ENCODE measurements at regions of chr19 and their contacts with region 1.

Region 1: DNA sequence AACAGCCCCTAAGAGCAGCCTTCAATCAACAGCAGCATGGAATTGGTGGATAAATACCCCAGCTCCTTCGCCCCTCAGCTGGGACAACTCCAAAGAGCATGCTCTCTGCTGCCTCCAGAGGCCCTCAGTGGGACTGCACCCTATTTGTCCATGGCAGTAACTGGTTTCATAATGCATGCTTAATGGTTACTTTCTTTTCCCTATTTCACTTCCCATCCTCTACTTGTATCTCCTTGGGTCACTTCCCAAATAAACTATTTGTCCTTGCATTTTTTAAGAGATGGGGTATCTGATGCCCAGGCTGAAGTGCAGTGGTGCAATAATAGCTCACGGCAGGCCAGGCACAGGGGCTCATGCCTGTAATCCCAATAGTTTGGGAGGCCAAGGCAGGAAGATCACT is 13.5 kb upstream of the TPM4 start:
- DNase-seq: peak; percentile 51 to 78 (median 66)
- ATAC-seq: peak; percentile 86
- H3K4me3 ChIP-seq: no peak overlapping the region
- H3K4me3 Mint-ChIP-seq: no peak overlapping the region
- H3K27ac ChIP-seq: no peak overlapping the region
- H3K27ac Mint-ChIP-seq: no peak overlapping the region
- H3K4me1 ChIP-seq: peaks cover 26% of the 10 kb centered on the region
- H3K4me1 Mint-ChIP-seq: peaks cover 16% of the 10 kb centered on the region
- H3K27me3 ChIP-seq: no peaks in the 10 kb centered on the region
- H3K27me3 Mint-ChIP-seq: no peaks in the 10 kb centered on the region
- CTCF ChIP-seq: peak; percentile 85

Region 2: DNA sequence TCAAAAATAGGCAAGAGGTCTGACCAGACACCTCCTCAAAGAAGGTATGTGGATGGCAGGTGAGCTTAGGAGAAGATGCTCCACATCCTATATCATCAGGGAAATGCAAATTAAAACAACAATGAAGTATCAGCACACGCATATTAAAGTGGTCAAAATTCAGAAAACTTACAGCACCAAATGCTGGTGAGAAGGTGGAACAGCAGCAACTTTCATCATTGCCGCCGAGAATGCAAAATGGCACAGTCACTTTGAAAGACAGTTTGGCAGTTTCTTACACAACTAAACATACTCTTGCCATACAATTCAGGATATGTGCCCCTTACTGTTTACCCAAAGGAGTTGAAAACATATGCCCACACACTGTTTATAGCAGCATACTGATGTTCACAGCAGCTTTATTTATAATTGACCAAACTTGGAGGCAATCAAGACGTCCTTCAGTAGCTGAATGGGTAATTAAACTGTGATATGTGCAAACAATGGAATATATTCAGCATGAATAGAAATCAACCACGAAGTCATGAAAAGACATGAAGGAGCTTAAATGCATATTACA is 91.5 kb before region 1 on chr19:
- CTCF ChIA-PET with region 1: no interaction called
- POLR2A ChIA-PET with region 1: no interaction called
- intact Hi-C with region 1: no loop called
- DNase-seq: no peak
- ATAC-seq: no peak
- H3K4me3 ChIP-seq: no peak overlapping the region
- H3K4me3 Mint-ChIP-seq: no peak overlapping the region
- H3K27ac ChIP-seq: no peak overlapping the region
- H3K27ac Mint-ChIP-seq: no peak overlapping the region
- H3K4me1 ChIP-seq: no peaks in the 10 kb centered on the region
- H3K4me1 Mint-ChIP-seq: no peaks in the 10 kb centered on the region
- H3K27me3 ChIP-seq: no peaks in the 10 kb centered on the region
- H3K27me3 Mint-ChIP-seq: peaks cover 20% of the 10 kb centered on the region
- CTCF ChIP-seq: no peak

Region 3: GRCh38 chr19:16030964-16031593 is 31.7 kb before region 1 on chr19:
- CTCF ChIA-PET with region 1: no interaction called
- POLR2A ChIA-PET with region 1: no interaction called
- intact Hi-C with region 1: no loop called
- DNase-seq: no peak
- ATAC-seq: no peak
- H3K4me3 ChIP-seq: no peak overlapping the region
- H3K4me3 Mint-ChIP-seq: no peak overlapping the region
- H3K27ac ChIP-seq: no peak overlapping the region
- H3K27ac Mint-ChIP-seq: no peak overlapping the region
- H3K4me1 ChIP-seq: no peaks in the 10 kb centered on the region
- H3K4me1 Mint-ChIP-seq: no peaks in the 10 kb centered on the region
- H3K27me3 ChIP-seq: no peaks in the 10 kb centered on the region
- H3K27me3 Mint-ChIP-seq: no peaks in the 10 kb centered on the region
- CTCF ChIP-seq: no peak

Region 4: GRCh38 chr19:16041299-16041990 is 21.3 kb before region 1 on chr19:
- CTCF ChIA-PET with region 1: interaction called, 23 read pairs
- POLR2A ChIA-PET with region 1: no interaction called
- intact Hi-C with region 1: no loop called
- DNase-seq: peak; percentile 50 to 86 (median 76)
- ATAC-seq: peak; percentile 91
- H3K4me3 ChIP-seq: no peak overlapping the region
- H3K4me3 Mint-ChIP-seq: peak overlapping the region; percentile 11
- H3K27ac ChIP-seq: no peak overlapping the region
- H3K27ac Mint-ChIP-seq: no peak overlapping the region
- H3K4me1 ChIP-seq: peaks cover 8% of the 10 kb centered on the region
- H3K4me1 Mint-ChIP-seq: peaks cover 16% of the 10 kb centered on the region
- H3K27me3 ChIP-seq: no peaks in the 10 kb centered on the region
- H3K27me3 Mint-ChIP-seq: no peaks in the 10 kb centered on the region
- CTCF ChIP-seq: peak; percentile 96

Region 5: DNA sequence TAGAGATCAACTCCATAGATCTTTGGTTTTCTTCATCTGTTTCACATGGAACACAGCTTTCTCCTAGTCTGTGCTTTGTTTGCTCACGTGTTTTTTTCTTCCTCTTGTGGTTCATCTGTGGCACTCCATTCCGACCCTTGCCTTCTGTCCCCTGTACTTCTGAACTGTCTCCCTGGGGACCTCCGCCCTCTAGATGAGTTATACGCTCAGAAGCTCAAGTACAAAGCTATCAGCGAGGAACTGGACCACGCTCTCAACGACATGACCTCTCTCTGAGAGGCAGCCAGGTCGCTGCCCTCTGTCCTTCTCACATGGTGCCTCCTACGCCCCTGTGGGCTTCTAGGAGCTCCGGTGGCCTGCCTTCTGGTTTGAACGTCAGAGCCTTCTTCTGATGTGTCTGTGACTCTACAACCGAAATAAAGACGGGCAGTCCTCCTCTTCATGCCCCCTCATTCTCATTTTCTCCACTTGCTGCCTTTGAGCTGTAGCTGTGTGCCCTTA is 32.3 kb after region 1 on chr19:
- CTCF ChIA-PET with region 1: interaction called, 20 read pairs
- POLR2A ChIA-PET with region 1: no interaction called
- intact Hi-C with region 1: no loop called
- DNase-seq: peak in 2 of 9 experiments; percentile 23 to 51
- ATAC-seq: peak; percentile 60
- H3K4me3 ChIP-seq: no peak overlapping the region
- H3K4me3 Mint-ChIP-seq: peak overlapping the region; percentile 47
- H3K27ac ChIP-seq: peak overlapping the region; percentile 43
- H3K27ac Mint-ChIP-seq: peak overlapping the region; percentile 87
- H3K4me1 ChIP-seq: peaks cover 23% of the 10 kb centered on the region
- H3K4me1 Mint-ChIP-seq: peaks cover 25% of the 10 kb centered on the region
- H3K27me3 ChIP-seq: no peaks in the 10 kb centered on the region
- H3K27me3 Mint-ChIP-seq: no peaks in the 10 kb centered on the region
- CTCF ChIP-seq: no peak